AG04449 (cell line): ENCODE measurements at regions of chr5 and their contacts with region 1.

Region 1: DNA sequence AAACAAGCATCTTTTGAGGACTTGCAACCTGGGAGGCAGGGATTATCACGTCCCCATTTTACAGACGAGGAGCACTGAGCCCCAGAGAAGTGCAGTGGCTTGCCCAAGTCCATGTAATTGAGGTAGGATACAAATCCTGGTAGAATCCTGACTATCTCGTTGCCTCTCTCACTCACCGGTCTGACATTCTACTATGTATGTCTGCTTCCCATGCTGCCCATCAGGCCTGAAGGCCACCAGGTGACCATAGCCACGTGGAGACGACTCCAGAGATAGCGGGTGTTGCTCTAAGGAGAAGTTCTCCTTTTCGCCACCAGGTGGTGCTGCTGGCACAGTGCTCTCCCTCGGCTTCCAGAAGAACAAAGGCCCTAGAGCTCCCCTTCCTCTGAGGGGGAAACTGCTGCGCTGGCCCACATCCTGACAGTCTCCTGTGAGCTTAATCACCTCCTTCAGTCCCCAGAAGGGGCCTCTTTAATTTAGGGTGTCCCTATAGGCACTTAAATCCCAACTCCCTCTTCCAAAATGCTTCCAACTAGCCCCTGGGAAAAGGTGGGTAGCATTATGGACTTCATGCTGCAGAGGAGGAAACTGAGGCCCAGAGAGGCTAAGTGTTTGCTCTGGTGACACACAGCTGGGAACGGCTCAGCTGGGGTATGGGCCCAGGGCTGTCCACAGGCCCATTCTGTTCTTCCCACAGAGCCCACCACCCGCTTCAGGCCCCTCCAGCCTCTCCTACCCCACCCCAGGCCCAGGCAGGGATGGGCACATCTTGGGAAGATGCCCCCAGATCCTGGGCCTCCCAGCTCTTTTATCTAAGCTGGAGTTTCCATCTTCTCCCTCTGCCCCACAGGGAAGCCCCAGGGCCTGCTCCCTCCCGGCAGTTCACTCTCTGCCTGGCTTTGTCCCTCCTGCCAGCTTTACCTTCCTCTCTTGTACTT is 6.4 kb downstream of the SLC34A1 start:
- DNase-seq: no peak
- H3K4me3 ChIP-seq: no peak overlapping the region
- CTCF ChIP-seq: peak; percentile 89

Region 2: GRCh38 chr5:177232761-177233160 is 157.9 kb before region 1 on chr5:
- CTCF ChIA-PET with region 1: no interaction called
- POLR2A ChIA-PET with region 1: no interaction called
- DNase-seq: peak; percentile 54
- H3K4me3 ChIP-seq: no peak overlapping the region
- CTCF ChIP-seq: no peak

Region 3: GRCh38 chr5:177311723-177312648 is 78.6 kb before region 1 on chr5 and contains the start of gene MXD3:
- CTCF ChIA-PET with region 1: interaction called, 28 read pairs
- POLR2A ChIA-PET with region 1: no interaction called
- DNase-seq: no peak
- H3K4me3 ChIP-seq: peak within 1 kb of the TSS; percentile 68
- CTCF ChIP-seq: no peak

Region 4: DNA sequence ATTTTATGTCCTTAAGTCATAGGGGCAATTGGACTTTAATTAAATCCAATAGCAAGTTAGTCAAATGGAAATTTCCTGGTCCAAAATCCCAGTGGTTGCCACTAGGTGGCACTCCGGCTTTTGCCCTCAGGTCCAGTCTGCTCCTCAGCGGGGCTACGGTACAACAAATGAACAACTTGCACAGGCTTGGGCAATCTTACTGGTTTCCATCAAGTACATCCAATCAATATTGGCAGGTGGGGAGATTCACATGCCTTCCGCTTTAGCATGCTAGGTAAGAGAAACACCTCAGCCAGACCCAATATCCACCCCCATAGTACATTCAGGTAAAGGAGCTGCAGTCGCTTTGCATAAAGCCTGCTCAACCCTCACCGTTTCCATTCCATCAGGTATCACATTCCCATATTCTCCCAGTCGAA is 72.7 kb before region 1 on chr5:
- CTCF ChIA-PET with region 1: interaction called, 13 read pairs
- POLR2A ChIA-PET with region 1: no interaction called
- DNase-seq: peak; percentile 38
- H3K4me3 ChIP-seq: no peak overlapping the region
- CTCF ChIP-seq: peak; percentile 78

Region 5: DNA sequence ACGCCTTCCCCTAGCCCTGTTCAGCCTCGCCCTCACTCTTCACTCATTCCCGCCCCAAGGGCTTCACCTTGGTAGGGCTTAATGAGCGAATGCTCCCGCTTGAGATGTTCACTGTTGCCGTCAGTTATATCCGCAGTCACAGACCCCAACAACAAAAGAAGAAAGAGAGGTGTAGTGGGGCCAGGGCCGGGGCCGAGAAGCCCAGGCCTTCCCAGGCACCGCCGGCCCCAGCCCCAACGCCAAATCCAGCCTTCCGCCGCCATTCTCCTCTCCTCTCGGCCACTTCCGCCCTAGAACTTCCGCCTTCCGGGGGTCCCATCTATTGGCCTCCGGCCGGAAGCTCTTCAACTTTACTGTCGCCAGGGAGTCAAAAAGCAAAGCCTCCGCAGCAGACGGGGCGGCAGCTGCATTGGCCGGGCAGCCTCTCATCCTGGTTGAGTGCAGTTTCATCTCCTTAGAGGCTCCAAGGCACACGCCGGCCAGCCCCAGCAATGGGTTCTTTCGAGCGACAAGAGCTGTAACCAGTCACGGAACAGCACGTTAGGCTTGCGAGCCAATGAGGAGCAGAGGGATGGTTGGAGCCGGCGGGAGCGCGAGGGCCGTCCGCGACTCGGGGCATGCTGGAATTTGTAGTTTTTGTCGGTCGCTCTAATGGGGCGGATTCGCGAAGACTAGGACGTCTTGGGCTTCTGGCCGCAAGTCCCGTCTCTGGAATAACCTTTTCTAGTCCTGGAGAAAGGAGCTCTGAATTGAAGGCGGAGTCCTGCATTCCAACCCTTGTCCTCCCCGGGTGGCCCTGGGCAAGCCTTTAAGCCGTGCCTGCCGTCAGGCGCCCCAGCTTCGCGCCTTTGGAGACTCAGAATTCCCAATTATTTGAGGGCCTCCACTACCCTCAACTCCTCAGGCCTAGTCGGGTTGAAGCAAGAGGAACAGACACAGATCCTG is 39.0 kb before region 1 on chr5 and contains the start of gene LMAN2:
- CTCF ChIA-PET with region 1: interaction called, 12 read pairs
- POLR2A ChIA-PET with region 1: interaction called, 4 read pairs
- DNase-seq: peak; percentile 80
- H3K4me3 ChIP-seq: peak within 1 kb of the TSS; percentile 97
- CTCF ChIP-seq: no peak

Region 6: DNA sequence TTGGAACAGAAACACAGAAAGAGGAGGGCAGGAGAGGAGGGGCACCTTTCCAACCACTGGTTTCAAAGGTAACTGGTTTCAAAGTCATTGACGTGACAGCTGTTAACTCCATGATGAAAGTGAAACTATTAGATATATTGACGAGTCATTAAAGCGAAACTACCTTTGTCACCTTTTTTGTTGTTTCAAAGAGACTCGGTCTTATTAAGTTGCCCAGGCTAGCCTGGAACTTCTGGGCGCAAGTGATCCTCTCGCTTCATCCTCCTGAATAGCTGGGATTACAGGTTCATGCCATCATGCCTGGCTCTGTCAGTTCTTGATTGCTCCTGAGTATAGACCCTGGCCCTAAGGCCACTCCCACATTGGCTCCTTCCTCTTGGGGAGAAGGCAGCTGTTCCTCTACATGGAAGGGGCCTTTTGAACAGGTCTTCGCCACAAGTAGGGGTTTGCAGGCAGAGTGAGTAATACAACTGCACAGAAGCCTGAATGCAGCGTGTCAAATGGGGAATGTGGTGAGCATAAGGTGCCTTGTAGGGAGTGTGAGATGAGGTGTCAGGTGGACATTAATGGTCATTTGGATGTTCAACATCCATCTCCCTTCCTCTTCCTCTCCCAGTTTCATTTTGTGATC is 22.1 kb after region 1 on chr5:
- CTCF ChIA-PET with region 1: interaction called, 853 read pairs
- POLR2A ChIA-PET with region 1: no interaction called
- DNase-seq: no peak
- H3K4me3 ChIP-seq: no peak overlapping the region
- CTCF ChIP-seq: no peak

Region 7: DNA sequence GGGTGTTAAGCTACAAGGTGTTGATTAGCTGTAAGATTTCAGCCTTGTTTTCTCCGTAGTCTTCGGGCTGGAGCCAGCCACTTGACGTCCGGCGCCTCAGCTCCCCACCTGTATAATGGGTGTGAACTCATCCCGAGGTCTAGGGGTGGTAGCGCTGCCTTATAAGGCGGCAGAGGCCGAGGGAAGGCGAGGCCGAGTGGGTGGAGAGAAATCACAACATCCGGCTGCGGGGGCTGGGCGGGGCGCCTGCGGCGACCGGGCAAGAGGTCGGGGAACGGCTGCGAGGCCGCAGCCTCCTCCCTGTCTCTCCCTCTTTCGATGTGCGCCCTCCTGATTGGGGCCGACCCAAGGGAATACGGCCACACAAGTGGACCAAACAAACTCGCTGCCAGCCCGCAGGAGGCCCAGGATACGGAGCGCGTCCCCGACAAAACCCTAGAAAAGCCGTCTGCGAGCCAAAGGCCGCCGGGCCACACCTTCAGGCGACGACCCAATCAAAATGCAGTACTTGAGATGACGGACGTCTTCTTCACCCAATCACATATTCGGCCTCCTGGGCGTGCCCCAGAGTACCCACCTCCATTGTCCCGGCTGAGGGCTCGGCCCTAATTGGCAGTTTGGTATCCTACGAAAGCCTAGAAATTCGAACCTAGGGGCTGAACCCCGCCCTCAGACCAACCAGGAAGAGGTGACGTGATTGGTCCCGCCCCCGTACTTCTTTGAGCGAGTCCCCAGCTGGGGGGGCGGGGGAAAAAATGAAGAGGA is 35.4 kb after region 1 on chr5:
- CTCF ChIA-PET with region 1: interaction called, 47 read pairs
- POLR2A ChIA-PET with region 1: no interaction called
- DNase-seq: peak; percentile 100
- H3K4me3 ChIP-seq: peak overlapping the region; percentile 69
- CTCF ChIP-seq: no peak

Region 8: GRCh38 chr5:177473461-177474001 is 82.9 kb after region 1 on chr5 and contains the start of gene DBN1:
- CTCF ChIA-PET with region 1: interaction called, 26 read pairs
- POLR2A ChIA-PET with region 1: interaction called, 4 read pairs
- DNase-seq: no peak
- H3K4me3 ChIP-seq: peak within 1 kb of the TSS; percentile 89
- CTCF ChIP-seq: no peak